Esophagus muscularis mucosa (tissue), 4 donors: ENCODE measurements at regions of chr7 and their contacts with region 1.

Region 1: DNA sequence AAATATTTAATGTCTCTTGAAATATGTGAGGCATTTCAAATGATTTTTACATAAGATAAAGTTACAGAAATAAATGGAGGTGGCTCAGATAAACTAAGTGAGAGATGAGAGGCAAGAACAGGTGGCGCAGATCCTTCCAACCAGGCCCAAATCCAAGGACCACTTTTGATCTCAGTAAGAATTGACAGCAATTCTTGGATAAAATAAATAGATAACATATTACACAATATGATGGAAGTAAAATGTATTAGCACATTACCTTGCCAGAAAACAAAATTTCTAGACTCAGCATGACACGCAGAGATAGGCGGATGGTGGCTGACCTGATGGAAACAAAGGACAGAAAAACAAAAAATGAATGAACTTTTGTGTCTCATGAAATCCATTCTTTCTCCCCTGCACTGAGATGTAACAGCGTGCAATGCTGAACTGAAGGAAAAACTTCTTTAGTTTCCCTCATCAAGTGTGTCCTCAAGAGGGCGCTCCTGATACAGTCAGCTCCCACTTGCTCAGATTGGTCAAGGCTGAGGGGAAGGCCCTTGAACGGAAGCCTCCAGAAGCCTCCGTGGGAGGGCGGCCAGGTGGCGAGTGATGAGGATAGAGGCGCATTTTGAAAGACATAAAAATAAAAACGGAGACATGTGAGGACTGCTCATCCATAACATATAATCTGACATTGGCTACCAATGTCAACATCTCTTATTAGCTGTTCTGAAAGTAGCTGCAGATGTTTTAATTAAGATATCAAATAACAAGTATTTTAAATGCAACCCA is 62.8 kb upstream of the GSDME start:
- DNase-seq: peak; percentile 95
- H3K4me3 ChIP-seq: no peak overlapping the region
- H3K27ac ChIP-seq: peak overlapping the region in 3 of 4 donors; percentile 45 to 62 (median 59)
- H3K4me1 ChIP-seq: peaks cover 8 to 24% (median 23%) of the 10 kb centered on the region in 4 donors
- H3K27me3 ChIP-seq: no peaks in the 10 kb centered on the region
- CTCF ChIP-seq: peak; percentile 81 to 90 (median 84)
- EP300 ChIP-seq: no peak
- POLR2A ChIP-seq: no peak

Region 2: GRCh38 chr7:25093268-25093826 is 273.2 kb after region 1 on chr7:
- intact Hi-C with region 1: loop called (anchors 5 kb)
- DNase-seq: no peak
- H3K4me3 ChIP-seq: no peak overlapping the region
- H3K27ac ChIP-seq: no peak overlapping the region
- H3K4me1 ChIP-seq: peaks cover 0 to 6% (median 2%) of the 10 kb centered on the region in 4 donors
- H3K27me3 ChIP-seq: no peaks in the 10 kb centered on the region
- CTCF ChIP-seq: peak; percentile 47 to 76 (median 48)
- EP300 ChIP-seq: no peak
- POLR2A ChIP-seq: no peak